IMR-90 (cell line): ENCODE measurements at regions of chr20 and their contacts with region 1.

Region 1: DNA sequence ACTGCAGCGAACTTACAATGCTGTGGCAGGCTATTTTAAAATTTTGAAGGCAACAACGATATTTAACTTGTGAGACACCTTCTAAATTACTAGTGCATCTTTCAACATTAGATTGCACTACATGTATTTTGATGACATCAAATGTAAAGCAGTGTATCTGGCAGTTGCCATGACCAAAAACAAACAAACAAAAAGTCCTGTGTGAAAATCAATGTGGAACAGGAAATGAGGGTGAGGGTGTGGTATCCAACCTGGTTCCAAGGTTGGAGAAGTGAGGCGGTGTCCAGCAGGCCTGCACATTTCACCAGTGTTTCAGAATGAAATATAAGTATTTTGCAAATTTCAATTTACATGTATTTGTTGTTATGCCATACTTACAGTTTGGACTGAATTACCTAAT is 112.0 kb downstream of the LAMP5 start:
- DNase-seq: no peak
- ATAC-seq: no peak
- H3K4me3 ChIP-seq: no peak overlapping the region
- H3K27ac ChIP-seq: no peak overlapping the region
- H3K4me1 ChIP-seq: no peaks in the 10 kb centered on the region
- H3K27me3 ChIP-seq: peaks cover 3% of the 10 kb centered on the region
- CTCF ChIP-seq: no peak
- POLR2A ChIP-seq: no peak
- RAD21 ChIP-seq: no peak

Region 2: GRCh38 chr20:10412591-10413408 is 786.4 kb after region 1 on chr20:
- CTCF ChIA-PET with region 1: no interaction called
- POLR2A ChIA-PET with region 1: no interaction called
- dilution Hi-C with region 1: no loop called
- in situ Hi-C with region 1: loop called (anchors 10 kb)
- intact Hi-C with region 1: no loop called
- DNase-seq: no peak
- ATAC-seq: no peak
- H3K4me3 ChIP-seq: no peak overlapping the region
- H3K27ac ChIP-seq: no peak overlapping the region
- H3K4me1 ChIP-seq: no peaks in the 10 kb centered on the region
- H3K27me3 ChIP-seq: no peaks in the 10 kb centered on the region
- CTCF ChIP-seq: 0 out of 2 replicates have a peak, but pooled peaks have one; percentile 12
- POLR2A ChIP-seq: no peak
- RAD21 ChIP-seq: peak; percentile 20; the same call in 1 of the 2 replicates